Ovary (tissue), 10 donors: ENCODE measurements at regions of chr9 and their contacts with region 1.

Region 1: DNA sequence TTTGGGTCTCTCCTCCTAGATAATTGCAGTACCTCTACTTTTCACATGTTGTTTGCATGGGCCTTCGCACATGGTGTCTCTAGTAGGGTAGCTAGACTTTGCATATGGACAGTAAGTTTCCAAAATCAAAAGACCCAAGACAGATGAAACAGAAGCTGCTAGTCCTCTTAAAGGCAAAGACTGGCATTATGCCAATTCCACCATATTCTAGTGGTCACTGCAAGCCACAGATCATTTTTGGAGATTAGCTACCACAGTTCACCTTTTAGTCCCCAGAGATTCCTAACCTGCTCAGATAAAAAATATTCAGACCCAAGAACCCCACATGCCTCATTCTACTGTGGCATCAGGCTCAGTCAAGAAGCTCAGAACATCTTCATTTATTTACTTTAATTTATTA is 506.9 kb downstream of the CYLC2 start:
- DNase-seq: no peak
- H3K4me3 ChIP-seq: no peak overlapping the region
- H3K27ac ChIP-seq: no peak overlapping the region
- H3K4me1 ChIP-seq: no peaks in the 10 kb centered on the region
- H3K27me3 ChIP-seq: no peaks in the 10 kb centered on the region
- CTCF ChIP-seq: no peak
- EP300 ChIP-seq: no peak
- POLR2A ChIP-seq: no peak

Region 2: DNA sequence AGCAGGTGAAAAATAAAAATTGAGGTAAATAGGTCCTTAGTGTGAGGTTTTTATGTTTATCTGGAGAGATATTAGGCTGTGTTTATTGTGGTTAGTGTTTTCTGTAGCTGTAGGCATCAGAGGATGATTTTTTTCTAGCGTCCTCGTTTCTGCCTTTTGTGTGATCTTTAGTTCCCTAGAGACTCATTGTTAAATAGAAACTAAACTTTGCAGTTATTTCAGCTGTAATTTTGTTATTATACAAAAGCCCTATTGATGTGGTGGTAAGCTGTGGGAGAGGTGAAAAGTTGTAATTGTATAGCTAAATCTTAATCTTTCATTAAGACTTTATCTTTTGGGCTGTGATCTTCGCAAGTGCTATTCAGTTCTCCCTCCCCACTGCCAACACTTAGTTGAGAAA is 166.6 kb before region 1 on chr9:
- intact Hi-C with region 1: no loop called
- DNase-seq: no peak
- H3K4me3 ChIP-seq: no peak overlapping the region
- H3K27ac ChIP-seq: no peak overlapping the region
- H3K4me1 ChIP-seq: no peaks in the 10 kb centered on the region
- H3K27me3 ChIP-seq: no peaks in the 10 kb centered on the region
- CTCF ChIP-seq: no peak
- EP300 ChIP-seq: no peak
- POLR2A ChIP-seq: no peak

Region 3: GRCh38 chr9:103458826-103459225 is 43.2 kb before region 1 on chr9:
- intact Hi-C with region 1: loop called in 1 of 4 experiments (anchors 1 kb)
- DNase-seq: no peak
- H3K4me3 ChIP-seq: no peak overlapping the region
- H3K27ac ChIP-seq: no peak overlapping the region
- H3K4me1 ChIP-seq: no peaks in the 10 kb centered on the region
- H3K27me3 ChIP-seq: no peaks in the 10 kb centered on the region
- CTCF ChIP-seq: no peak
- EP300 ChIP-seq: no peak
- POLR2A ChIP-seq: no peak

Region 4: GRCh38 chr9:103522409-103522808 is 20.4 kb after region 1 on chr9:
- intact Hi-C with region 1: no loop called
- DNase-seq: no peak
- H3K4me3 ChIP-seq: no peak overlapping the region
- H3K27ac ChIP-seq: no peak overlapping the region
- H3K4me1 ChIP-seq: no peaks in the 10 kb centered on the region
- H3K27me3 ChIP-seq: no peaks in the 10 kb centered on the region
- CTCF ChIP-seq: no peak
- EP300 ChIP-seq: no peak
- POLR2A ChIP-seq: no peak

Region 5: DNA sequence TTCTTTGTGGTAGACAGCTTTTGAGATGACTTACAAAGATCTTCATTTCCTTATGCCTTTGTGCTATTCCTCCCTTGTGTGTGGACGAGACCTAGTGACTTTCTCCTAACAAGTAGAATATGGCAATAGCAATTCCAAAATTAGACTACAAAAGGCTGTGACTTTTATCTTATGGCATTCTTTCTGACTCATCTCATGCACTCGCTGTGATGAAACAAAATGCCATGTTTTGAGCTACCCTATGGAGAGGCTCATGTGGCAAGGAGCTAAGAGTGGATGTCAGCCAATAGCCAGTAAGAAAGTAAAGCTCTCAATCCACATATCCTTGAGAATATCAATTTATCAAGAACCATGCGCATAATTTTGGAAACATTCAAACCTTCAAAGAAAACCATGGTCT is 211.6 kb after region 1 on chr9:
- intact Hi-C with region 1: no loop called
- DNase-seq: no peak
- H3K4me3 ChIP-seq: no peak overlapping the region
- H3K27ac ChIP-seq: no peak overlapping the region
- H3K4me1 ChIP-seq: no peaks in the 10 kb centered on the region
- H3K27me3 ChIP-seq: no peaks in the 10 kb centered on the region
- CTCF ChIP-seq: no peak
- EP300 ChIP-seq: no peak
- POLR2A ChIP-seq: no peak

Region 6: DNA sequence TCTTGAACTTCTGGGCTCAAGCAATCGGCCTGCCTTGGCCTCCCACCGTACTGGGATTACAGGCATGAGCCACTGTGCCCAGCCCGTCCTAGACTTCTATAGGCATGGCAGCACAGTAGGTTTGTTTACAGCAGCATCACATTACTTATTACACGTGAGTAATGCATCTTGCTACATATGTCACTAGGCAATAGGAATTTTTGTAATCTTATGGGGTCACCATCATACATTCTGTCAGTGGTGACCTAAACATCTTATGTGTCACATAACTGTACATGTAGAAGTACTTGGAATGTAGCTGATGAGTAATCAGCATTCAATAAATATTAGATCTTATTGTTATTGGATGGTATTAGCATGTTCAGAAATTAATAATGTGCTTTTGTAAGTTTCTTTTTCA is 1448.8 kb after region 1 on chr9:
- intact Hi-C with region 1: no loop called
- DNase-seq: no peak
- H3K4me3 ChIP-seq: no peak overlapping the region
- H3K27ac ChIP-seq: no peak overlapping the region
- H3K4me1 ChIP-seq: no peaks in the 10 kb centered on the region
- H3K27me3 ChIP-seq: no peaks in the 10 kb centered on the region
- CTCF ChIP-seq: no peak
- EP300 ChIP-seq: no peak
- POLR2A ChIP-seq: no peak